Dendritic cell treated with granulocyte-macrophage colony-stimulating factor and Interleukin-4, amounts not matched to agents 40 ng/mL and 50 ng/mL, for 4 days (primary cell): ENCODE measurements at regions of chr6 and their contacts with region 1.

Region 1: DNA sequence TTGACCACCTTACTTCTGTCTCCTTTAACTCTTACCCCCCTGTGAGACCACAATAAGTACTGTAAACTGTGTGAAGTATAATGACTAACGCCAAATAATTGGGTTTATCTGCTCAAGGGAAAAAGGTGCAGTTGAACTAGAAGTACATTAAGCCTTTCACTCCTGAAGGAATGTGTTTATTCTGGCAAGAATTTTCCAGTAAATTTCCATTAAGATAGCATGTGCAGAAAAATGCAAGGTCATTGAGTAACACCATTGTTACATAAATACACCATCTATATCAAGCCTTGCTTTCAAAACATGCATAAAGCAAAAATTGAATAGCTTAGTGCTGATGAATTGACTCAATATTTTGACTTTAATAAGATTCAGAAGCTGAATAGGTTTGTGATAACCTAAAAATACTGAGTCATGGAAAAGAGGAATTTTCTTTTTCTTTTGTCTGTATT is 65.4 kb downstream of the ARHGAP18 start:
- H3K4me3 Mint-ChIP-seq: no peak overlapping the region
- H3K27ac Mint-ChIP-seq: peak overlapping the region; percentile 69
- H3K4me1 Mint-ChIP-seq: peaks cover 37% of the 10 kb centered on the region
- H3K27me3 Mint-ChIP-seq: no peaks in the 10 kb centered on the region

Region 2: GRCh38 chr6:129546702-129547101 is 97.9 kb before region 1 on chr6:
- intact Hi-C with region 1: no loop called
- H3K4me3 Mint-ChIP-seq: no peak overlapping the region
- H3K27ac Mint-ChIP-seq: no peak overlapping the region
- H3K4me1 Mint-ChIP-seq: peaks cover 18% of the 10 kb centered on the region
- H3K27me3 Mint-ChIP-seq: no peaks in the 10 kb centered on the region

Region 3: GRCh38 chr6:129621247-129621646 is 23.3 kb before region 1 on chr6:
- intact Hi-C with region 1: no loop called
- H3K4me3 Mint-ChIP-seq: no peak overlapping the region
- H3K27ac Mint-ChIP-seq: no peak overlapping the region
- H3K4me1 Mint-ChIP-seq: peaks cover 21% of the 10 kb centered on the region
- H3K27me3 Mint-ChIP-seq: no peaks in the 10 kb centered on the region

Region 4: DNA sequence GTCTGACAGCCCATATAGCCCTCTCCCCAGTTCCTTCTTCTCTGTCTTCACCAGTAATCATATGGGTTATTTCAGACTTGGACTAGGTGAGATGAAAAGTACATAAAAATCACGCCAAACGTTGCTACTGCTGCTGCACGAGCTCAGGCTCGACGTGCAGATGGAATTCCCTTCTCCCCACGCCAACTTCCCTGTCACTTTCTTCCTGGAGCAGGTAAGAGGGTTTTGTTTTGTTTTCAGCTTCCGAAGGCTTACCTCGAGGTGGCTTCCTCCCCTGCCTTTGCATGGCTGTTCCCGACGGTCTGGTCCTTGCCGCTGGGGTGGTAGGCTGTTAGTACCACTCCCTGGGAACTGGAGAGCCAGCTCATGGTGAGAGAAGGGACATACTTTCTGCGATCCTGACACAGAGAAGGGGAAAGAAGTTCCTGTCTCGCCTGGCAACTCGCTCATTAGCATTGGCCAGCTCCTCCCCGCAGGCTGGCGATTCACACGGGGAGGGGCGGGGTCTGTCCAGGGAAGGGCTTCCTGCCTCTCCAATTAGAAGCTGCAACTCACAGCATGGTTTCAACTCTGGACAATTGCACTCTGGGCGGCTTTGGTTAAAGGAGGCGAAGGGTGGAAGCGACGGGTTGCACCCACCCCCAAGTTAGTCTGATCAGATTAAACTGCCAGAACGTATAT is 65.3 kb after region 1 on chr6 and contains the start of gene ARHGAP18:
- intact Hi-C with region 1: loop called (anchors 5 kb)
- H3K4me3 Mint-ChIP-seq: peak within 1 kb of the TSS; percentile 96
- H3K27ac Mint-ChIP-seq: peak within 1 kb of the TSS; percentile 87
- H3K4me1 Mint-ChIP-seq: peaks cover 39% of the 10 kb centered on the region
- H3K27me3 Mint-ChIP-seq: no peaks in the 10 kb centered on the region